WTC11 (cell line): ENCODE measurements at regions of chr14 and their contacts with region 1.

Region 1: GRCh38 chr14:77067632-77068514 is 30.2 kb upstream of the CIPC start:
- DNase-seq: peak; percentile 83
- ATAC-seq: peak; percentile 86
- H3K4me3 Mint-ChIP-seq: no peak overlapping the region
- H3K27ac Mint-ChIP-seq: no peak overlapping the region
- H3K4me1 Mint-ChIP-seq: peaks cover 27% of the 10 kb centered on the region
- H3K27me3 Mint-ChIP-seq: no peaks in the 10 kb centered on the region
- CTCF ChIP-seq: peak; percentile 74

Region 2: DNA sequence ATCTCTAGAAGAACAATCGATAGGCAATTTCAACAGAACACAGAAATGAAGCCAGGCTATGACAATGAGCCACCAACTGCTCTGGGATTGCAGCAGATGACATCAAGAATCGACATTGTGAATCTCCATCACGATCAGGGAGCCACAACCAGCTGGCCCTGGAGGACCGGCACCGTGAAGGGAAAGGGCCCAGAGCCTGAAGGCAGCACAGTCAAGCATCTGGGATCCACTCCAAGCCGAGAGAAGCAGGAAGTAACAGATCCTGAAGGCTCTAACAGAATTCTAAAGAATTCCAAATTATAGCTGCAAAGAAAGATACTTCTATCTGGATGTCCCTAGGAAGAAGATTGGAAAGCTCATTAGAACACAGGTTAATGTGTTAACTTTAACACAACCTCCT is 180.7 kb before region 1 on chr14:
- CTCF ChIA-PET with region 1: interaction called, 21 read pairs
- POLR2A ChIA-PET with region 1: interaction called, 5 read pairs
- DNase-seq: no peak
- ATAC-seq: no peak
- H3K4me3 Mint-ChIP-seq: no peak overlapping the region
- H3K27ac Mint-ChIP-seq: no peak overlapping the region
- H3K4me1 Mint-ChIP-seq: peaks cover 20% of the 10 kb centered on the region
- H3K27me3 Mint-ChIP-seq: no peaks in the 10 kb centered on the region; the same call in 1 of the 2 replicates
- CTCF ChIP-seq: no peak

Region 3: GRCh38 chr14:77086017-77086736 is 18.3 kb after region 1 on chr14:
- CTCF ChIA-PET with region 1: interaction called, 50 read pairs
- POLR2A ChIA-PET with region 1: interaction called, 3 read pairs
- DNase-seq: no peak
- ATAC-seq: peak; percentile 23; the same call in 1 of the 2 replicates
- H3K4me3 Mint-ChIP-seq: no peak overlapping the region
- H3K27ac Mint-ChIP-seq: peak overlapping the region; percentile 97
- H3K4me1 Mint-ChIP-seq: peaks cover 49% of the 10 kb centered on the region
- H3K27me3 Mint-ChIP-seq: no peaks in the 10 kb centered on the region; the same call in none of the 2 replicates
- CTCF ChIP-seq: no peak

Region 4: DNA sequence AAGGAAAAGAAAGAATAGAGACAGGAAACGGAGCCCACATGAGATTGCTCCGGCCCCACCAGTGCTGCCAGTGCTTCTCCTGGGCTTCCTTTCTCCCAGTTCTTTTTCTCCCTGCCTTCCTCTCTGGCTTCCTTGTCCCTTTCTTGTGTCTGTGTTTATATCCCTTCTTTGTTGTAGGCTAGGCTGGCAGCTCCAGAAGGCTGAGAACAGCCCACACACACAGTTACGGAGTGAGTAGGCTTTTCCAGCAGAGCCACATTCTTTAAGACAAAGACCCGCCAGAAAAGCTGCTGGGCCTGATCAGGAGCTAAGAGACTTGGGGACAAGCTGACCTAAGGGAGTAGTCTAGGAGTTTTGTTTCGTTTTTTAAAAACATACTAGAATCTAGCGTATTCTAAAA is 43.2 kb after region 1 on chr14:
- CTCF ChIA-PET with region 1: interaction called, 12 read pairs
- POLR2A ChIA-PET with region 1: no interaction called
- DNase-seq: peak; percentile 69
- ATAC-seq: peak; percentile 92
- H3K4me3 Mint-ChIP-seq: peak overlapping the region; percentile 28
- H3K27ac Mint-ChIP-seq: peak overlapping the region; percentile 100
- H3K4me1 Mint-ChIP-seq: peaks cover 52% of the 10 kb centered on the region
- H3K27me3 Mint-ChIP-seq: no peaks in the 10 kb centered on the region
- CTCF ChIP-seq: no peak